ENCODE measurements at regions of chr11 and their contacts with region 1.

Region 1: DNA sequence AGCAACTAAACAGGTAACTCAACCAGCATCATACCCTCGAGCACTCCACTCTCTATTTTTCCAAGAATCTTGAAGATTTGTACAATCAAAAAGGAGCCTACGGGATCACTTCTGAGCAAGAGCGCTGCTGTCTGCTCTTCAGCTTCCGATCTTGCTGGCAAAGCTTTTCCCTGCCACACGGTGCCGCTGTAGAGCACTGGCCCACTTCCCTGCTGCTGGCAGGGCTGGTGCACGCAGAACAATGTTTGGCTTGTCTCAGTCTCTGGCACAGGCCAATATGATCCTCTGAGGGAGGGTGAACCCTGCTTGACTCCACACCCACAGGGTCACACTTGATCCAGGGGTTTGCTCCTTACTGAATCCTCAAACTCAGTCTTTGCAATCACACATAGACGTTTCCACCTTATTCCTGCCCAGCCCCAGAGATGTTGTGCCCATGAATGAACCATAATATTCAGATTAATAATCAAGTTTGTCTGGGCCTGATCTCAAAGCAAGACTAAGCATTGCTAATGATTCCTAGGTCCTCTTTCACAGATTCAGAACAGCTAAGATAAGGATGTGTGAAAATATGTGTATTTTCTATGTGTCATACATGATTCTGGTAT is 536.6 kb downstream of the SOX6 start:
- DNase-seq: peak; percentile 26 to 90 (median 79)
- H3K4me3 ChIP-seq: no peak overlapping the region
- H3K27ac ChIP-seq: no peak overlapping the region
- H3K27me3 ChIP-seq: peaks cover 0 to 33% (median 0%) of the 10 kb centered on the region in 45 donors
- CTCF ChIP-seq: peak; percentile 62 to 98 (median 89)

Region 2: GRCh38 chr11:15843309-15843872 is 23.6 kb after region 1 on chr11:
- intact Hi-C with region 1: loop called in 1 of 2 experiments (anchors 2 kb)
- DNase-seq: peak in 5 of 10 donors; percentile 23 to 53 (median 47)
- H3K4me3 ChIP-seq: peak overlapping the region in 1 of 59 donors; percentile 35
- H3K27ac ChIP-seq: peak overlapping the region in 42 of 59 donors; percentile 15 to 80 (median 52)
- H3K27me3 ChIP-seq: peaks cover 0 to 2% (median 0%) of the 10 kb centered on the region in 45 donors
- CTCF ChIP-seq: peak in 6 of 56 donors; percentile 9 to 17 (median 10)

Region 3: DNA sequence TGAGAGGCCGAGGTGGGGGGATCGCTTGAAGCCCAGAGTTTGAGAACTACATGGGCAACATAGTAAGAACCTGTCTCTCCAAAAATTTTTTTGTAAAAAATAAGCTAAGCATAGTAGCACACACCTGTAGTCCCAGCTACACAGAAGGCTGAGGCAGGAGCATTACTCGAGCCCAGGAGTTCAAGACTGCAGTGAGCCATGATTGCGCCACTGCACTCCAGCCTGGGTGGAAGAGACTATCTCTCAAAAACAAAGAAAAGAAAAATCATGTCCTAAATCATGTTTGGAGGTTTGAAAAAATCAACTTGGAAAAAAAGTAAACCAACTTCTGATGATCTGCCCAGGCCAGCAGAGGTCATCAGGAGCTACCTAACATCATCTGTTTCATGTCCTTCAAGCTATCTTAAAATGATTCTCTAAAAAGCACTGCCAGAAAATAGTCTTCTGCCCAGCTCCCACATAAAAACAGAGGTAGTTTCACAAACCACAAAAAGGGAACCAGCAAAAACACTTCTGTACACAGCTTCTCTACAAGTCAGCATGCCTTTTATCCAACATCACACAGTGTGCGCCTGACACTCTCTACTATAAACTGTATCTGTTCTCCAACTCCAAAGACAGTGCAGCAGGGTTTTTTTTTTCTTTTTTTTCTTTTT is 371.6 kb after region 1 on chr11:
- intact Hi-C with region 1: loop called in 1 of 2 experiments (anchors 10 kb)
- DNase-seq: no peak
- H3K4me3 ChIP-seq: no peak overlapping the region
- H3K27ac ChIP-seq: no peak overlapping the region
- H3K27me3 ChIP-seq: peaks cover 0 to 59% (median 8%) of the 10 kb centered on the region in 45 donors
- CTCF ChIP-seq: peak in 11 of 56 donors; percentile 7 to 26 (median 18)

Measured in dorsolateral prefrontal cortex (tissue), 120 donors.